Endothelial cell of umbilical vein (primary cell): ENCODE measurements at regions of chr11 and their contacts with region 1.

Region 1: DNA sequence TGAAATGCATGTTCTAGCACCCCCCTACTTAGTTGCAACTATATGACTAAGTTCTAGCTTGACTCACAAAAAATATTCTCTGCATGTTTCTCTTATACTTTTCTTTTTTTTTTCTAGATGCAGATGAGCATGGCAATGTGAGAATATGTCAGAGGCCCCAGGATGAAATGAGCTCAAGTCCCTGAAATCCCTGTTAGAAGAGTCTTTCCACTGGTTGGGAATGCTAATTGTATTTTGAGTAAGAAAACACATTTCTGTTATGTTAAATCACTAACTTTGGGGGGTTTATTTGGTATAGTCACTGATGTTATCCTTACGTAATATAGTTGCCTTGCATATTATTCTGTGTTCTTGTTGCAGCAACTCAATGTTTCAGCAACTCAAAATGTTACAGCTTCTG is 306.1 kb upstream of the CCDC179 start:
- DNase-seq: no peak
- H3K4me3 ChIP-seq: no peak overlapping the region
- H3K27ac ChIP-seq: no peak overlapping the region
- H3K4me1 ChIP-seq: no peaks in the 10 kb centered on the region
- H3K27me3 ChIP-seq: no peaks in the 10 kb centered on the region
- CTCF ChIP-seq: no peak
- POLR2A ChIP-seq: no peak

Region 2: DNA sequence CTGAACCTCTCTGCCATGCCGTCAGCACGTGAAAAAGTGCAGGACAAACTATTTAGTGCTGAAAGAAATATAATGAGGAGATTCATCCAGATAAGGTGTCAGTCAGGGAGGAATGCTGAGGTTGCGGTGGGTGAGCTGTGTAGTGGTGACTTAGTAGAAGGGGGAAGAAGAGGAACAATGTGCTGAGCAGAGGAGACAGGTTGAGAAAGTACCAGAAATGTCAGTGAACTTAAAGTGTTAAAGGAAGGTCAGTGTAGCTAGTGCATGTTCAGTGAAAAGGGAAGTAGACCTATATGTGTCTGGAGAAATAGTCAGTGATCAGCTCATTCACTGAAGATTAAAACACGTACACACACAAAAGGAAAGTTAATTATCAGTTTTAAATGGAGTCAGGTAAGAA is 68.5 kb before region 1 on chr11:
- CTCF ChIA-PET with region 1: no interaction called
- POLR2A ChIA-PET with region 1: no interaction called
- dilution Hi-C with region 1: no loop called
- intact Hi-C with region 1: no loop called
- DNase-seq: no peak
- H3K4me3 ChIP-seq: no peak overlapping the region
- H3K27ac ChIP-seq: no peak overlapping the region
- H3K4me1 ChIP-seq: no peaks in the 10 kb centered on the region
- H3K27me3 ChIP-seq: no peaks in the 10 kb centered on the region
- CTCF ChIP-seq: no peak
- POLR2A ChIP-seq: no peak

Region 3: GRCh38 chr11:23143022-23143421 is 23.4 kb before region 1 on chr11:
- CTCF ChIA-PET with region 1: no interaction called
- POLR2A ChIA-PET with region 1: no interaction called
- dilution Hi-C with region 1: no loop called
- intact Hi-C with region 1: loop called (anchors 2 kb)
- DNase-seq: no peak
- H3K4me3 ChIP-seq: no peak overlapping the region
- H3K27ac ChIP-seq: no peak overlapping the region
- H3K4me1 ChIP-seq: no peaks in the 10 kb centered on the region
- H3K27me3 ChIP-seq: no peaks in the 10 kb centered on the region
- CTCF ChIP-seq: no peak
- POLR2A ChIP-seq: no peak

Region 4: DNA sequence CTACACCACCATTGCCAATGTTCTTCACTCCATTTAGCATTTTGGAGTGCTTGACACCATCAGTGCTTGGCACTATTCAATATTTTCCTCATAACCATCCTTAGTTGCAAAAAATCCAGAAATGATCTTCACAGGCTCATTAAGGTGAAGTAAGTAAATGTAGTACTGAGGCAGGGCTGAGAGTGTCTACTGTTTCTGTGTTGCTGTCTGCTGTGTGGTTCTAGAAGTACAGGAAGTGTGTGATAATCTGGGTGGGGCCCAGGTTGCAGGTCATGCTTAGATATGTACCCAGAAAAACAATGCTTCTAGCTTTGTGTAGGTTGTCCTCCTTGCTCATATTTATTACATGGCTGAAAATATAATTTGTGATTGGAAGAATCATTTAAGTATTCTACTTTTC is 105.7 kb after region 1 on chr11:
- CTCF ChIA-PET with region 1: no interaction called
- POLR2A ChIA-PET with region 1: no interaction called
- dilution Hi-C with region 1: no loop called
- intact Hi-C with region 1: no loop called
- DNase-seq: no peak
- H3K4me3 ChIP-seq: no peak overlapping the region
- H3K27ac ChIP-seq: no peak overlapping the region
- H3K4me1 ChIP-seq: no peaks in the 10 kb centered on the region
- H3K27me3 ChIP-seq: no peaks in the 10 kb centered on the region
- CTCF ChIP-seq: no peak
- POLR2A ChIP-seq: no peak

Region 5: GRCh38 chr11:23875176-23875850 is 708.9 kb after region 1 on chr11:
- CTCF ChIA-PET with region 1: no interaction called
- POLR2A ChIA-PET with region 1: no interaction called
- dilution Hi-C with region 1: no loop called
- intact Hi-C with region 1: no loop called
- DNase-seq: no peak
- H3K4me3 ChIP-seq: no peak overlapping the region
- H3K27ac ChIP-seq: no peak overlapping the region
- H3K4me1 ChIP-seq: no peaks in the 10 kb centered on the region
- H3K27me3 ChIP-seq: no peaks in the 10 kb centered on the region
- CTCF ChIP-seq: no peak
- POLR2A ChIP-seq: no peak